ENCODE measurements at regions of chr5 and their contacts with region 1.

Region 1: DNA sequence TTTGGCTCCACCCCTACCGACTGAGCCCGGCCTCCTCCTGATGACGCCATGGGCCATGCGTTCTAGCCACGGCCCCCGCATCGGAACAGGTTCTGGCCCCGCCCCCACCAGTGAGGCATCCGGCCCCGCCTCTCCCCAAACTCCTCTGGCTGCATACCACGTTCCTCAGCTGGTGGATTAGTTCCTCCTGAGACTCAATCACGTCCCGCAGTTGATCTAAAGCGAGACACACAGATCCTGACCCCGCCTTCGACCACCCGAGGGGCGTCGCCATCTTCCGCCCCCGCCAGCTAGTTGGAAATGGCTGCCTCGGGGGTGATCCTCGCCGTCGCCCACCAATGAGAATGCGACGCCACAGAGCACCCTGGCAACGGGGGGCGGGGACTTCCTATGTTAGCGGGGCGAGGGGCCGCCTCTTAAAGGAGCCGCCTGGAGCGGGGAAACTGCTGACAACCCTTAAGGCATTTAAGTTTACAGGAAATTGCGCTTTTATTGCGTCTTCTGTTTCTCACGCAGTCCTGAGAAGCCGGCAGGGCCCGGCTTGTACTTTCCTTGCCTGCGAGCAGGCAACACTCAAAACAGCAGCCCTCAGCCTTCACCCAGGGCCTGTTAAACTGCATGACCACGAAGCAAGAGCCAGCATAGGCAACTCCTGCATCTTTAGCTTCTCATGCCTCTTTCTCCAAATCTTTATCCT is at the start of gene SPATA24:
- DNase-seq: peak; percentile 96 to 98
- ATAC-seq: peak; percentile 92 to 97 (median 92)
- H3K4me3 ChIP-seq: peak within 1 kb of the TSS; percentile 61
- H3K4me3 Mint-ChIP-seq: peak within 1 kb of the TSS; percentile 96
- H3K27ac ChIP-seq: peak within 1 kb of the TSS; percentile 89
- H3K27ac Mint-ChIP-seq: peak within 1 kb of the TSS; percentile 94 to 99
- H3K4me1 ChIP-seq: peaks cover 25% of the 10 kb centered on the region
- H3K4me1 Mint-ChIP-seq: peaks cover 28 to 30% of the 10 kb centered on the region in 2 donors
- H3K27me3 ChIP-seq: no peaks in the 10 kb centered on the region
- H3K27me3 Mint-ChIP-seq: no peaks in the 10 kb centered on the region
- CTCF ChIP-seq: no peak
- total RNA-seq, gene SPATA24: 1.6 to 2.9 (median 2.7) TPM

Region 2: DNA sequence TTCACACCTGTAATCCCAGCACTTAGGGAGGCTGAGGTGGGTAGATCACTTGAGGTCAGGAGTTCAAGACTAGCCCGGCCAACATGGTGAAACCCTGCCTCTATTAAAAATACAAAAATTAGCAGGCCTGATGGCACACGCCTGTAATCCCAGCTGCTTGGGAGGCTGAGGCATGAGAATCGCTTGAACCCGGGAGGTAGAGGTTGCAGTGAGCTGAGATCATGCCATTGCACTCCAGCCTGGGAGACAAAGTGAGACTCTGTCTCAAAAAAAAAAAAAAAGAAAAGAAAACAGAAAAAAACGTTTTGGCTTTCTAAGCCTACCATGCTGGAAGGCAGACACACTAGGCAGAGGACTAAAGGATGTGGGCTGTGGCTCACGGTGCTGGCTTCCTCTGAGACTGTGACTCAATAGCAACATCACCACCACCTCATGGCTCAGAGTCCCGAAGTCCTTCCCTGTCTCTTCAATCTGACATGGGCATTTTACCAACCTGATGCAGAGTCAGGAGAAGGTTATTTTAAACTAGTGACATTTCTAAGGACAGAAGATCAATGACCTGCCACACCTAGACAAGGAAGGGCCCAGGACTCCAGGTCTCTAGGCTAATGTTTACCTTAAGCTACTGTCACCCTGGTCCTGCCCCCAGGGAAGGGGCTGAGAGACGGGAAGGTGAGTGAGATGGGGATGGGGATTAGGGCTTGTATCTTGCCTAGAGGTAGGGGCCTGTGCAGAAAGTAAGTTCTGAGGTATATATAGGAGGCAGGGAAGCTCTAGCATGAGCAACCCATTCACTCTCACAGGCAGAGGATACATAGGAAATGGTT is 54.9 kb after region 1 on chr5:
- intact Hi-C with region 1: loop called (anchors 5 kb)
- DNase-seq: peak; percentile 70 to 94
- ATAC-seq: peak; percentile 85 to 91 (median 88)
- H3K4me3 ChIP-seq: no peak overlapping the region
- H3K4me3 Mint-ChIP-seq: peak overlapping the region; percentile 73
- H3K27ac ChIP-seq: peak overlapping the region; percentile 61
- H3K27ac Mint-ChIP-seq: peak overlapping the region; percentile 57 to 92
- H3K4me1 ChIP-seq: peaks cover 48% of the 10 kb centered on the region
- H3K4me1 Mint-ChIP-seq: peaks cover 33 to 59% of the 10 kb centered on the region in 2 donors
- H3K27me3 ChIP-seq: no peaks in the 10 kb centered on the region
- H3K27me3 Mint-ChIP-seq: no peaks in the 10 kb centered on the region
- CTCF ChIP-seq: no peak

Measured in natural killer cell (primary cell).